Right ventricle myocardium inferior (tissue), 1 donor: ENCODE measurements at regions of chr2 and their contacts with region 1.

Region 1: GRCh38 chr2:47528874-47529273 is 125.9 kb downstream of the MSH2 start:
- DNase-seq: no peak
- ATAC-seq: no peak

Region 2: DNA sequence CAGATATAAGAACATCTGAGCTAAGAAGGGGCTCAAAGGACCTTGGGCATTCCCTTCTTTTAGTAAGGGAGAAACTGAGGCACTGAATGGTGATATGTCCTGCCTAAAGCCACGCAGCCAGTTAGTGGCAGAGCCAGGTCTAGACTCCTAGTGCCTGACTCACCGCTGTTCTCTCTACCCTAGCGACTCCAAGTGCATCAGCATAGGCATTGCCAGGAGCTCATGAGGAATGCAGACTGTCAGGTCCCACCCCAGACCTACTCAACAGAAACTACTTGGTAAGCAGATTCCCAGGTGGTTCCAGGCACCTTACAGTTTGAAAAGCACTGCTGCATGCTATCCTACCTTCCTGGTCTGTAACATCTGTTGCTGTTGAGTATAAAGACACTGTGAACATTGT is 33.0 kb after region 1 on chr2:
- intact Hi-C with region 1: loop called (anchors 5 kb)
- DNase-seq: no peak
- ATAC-seq: no peak